Vagina (tissue), 2 donors: ENCODE measurements at regions of chr1 and their contacts with region 1.

Region 1: DNA sequence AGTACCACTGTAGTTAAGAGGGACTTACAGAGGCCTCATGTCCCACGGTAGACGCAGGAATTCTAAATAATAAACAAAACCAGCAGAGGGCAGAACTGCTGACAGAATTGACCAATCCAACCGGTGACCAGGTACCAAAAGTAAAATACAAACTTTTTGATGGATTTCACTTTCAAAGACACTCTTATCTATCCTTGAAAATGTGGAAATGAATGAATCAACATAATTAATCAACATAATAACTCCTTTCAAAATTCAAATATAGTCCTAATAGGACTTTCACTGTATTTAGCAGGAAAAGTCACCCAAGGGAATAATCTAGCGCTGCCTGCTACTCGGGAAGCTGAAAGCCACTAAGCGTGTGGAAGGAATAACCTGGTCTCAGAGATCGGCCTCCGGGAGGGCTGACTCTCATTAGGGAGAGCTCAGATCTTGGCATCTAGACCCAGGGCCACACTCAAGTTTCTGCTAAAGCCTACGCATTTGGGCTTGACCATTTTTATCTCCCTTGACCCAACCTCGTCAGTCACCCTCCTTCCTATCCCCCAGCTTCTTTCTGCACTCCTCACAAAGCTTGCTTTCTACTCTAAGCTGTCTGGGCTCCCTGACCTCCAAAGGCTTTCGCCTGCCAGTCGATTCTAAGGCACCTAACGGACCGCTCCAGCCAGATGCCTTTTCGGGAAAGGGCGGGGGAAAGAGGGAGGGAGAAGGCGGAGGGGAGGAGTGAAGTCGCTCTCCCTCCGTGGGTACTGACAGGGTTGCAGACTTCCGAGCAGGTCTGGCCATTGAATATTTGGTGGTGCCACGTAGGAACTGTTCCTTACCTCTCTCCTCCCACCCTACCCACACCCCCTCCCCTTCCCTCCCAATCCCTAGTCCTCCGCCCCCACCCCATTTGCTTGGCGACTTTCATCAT is 1.6 kb downstream of the COL11A1 start:
- DNase-seq: no peak
- H3K4me3 ChIP-seq: peak overlapping the region; percentile 38 to 53
- H3K27ac ChIP-seq: no peak overlapping the region
- H3K4me1 ChIP-seq: peaks cover 28% of the 10 kb centered on the region
- H3K27me3 ChIP-seq: no peaks in the 10 kb centered on the region
- CTCF ChIP-seq: peak in 2 of 3 experiments; percentile 41 to 45
- POLR2A ChIP-seq: no peak

Region 2: GRCh38 chr1:103509250-103509649 is 402.6 kb after region 1 on chr1:
- intact Hi-C with region 1: loop called (anchors 5 kb)
- DNase-seq: no peak
- H3K4me3 ChIP-seq: no peak overlapping the region
- H3K27ac ChIP-seq: no peak overlapping the region
- H3K4me1 ChIP-seq: no peaks in the 10 kb centered on the region
- H3K27me3 ChIP-seq: no peaks in the 10 kb centered on the region
- CTCF ChIP-seq: no peak
- POLR2A ChIP-seq: no peak